Activated B cell treated with CpG ODN at 0.5 μM for 24 hours (primary cell): ENCODE measurements at regions of chr12 and their contacts with region 1.

Region 1: GRCh38 chr12:120725659-120726509 is at the start of gene ACADS:
- DNase-seq: peak; percentile 92
- ATAC-seq: peak; percentile 99
- H3K4me3 Mint-ChIP-seq: peak within 1 kb of the TSS; percentile 86
- H3K27ac Mint-ChIP-seq: peak within 1 kb of the TSS; percentile 70
- H3K4me1 Mint-ChIP-seq: peaks cover 28% of the 10 kb centered on the region
- H3K27me3 Mint-ChIP-seq: no peaks in the 10 kb centered on the region
- CTCF ChIP-seq: no peak
- total RNA-seq, gene ACADS: 9.4 and 11.1 TPM in 2 replicates

Region 2: DNA sequence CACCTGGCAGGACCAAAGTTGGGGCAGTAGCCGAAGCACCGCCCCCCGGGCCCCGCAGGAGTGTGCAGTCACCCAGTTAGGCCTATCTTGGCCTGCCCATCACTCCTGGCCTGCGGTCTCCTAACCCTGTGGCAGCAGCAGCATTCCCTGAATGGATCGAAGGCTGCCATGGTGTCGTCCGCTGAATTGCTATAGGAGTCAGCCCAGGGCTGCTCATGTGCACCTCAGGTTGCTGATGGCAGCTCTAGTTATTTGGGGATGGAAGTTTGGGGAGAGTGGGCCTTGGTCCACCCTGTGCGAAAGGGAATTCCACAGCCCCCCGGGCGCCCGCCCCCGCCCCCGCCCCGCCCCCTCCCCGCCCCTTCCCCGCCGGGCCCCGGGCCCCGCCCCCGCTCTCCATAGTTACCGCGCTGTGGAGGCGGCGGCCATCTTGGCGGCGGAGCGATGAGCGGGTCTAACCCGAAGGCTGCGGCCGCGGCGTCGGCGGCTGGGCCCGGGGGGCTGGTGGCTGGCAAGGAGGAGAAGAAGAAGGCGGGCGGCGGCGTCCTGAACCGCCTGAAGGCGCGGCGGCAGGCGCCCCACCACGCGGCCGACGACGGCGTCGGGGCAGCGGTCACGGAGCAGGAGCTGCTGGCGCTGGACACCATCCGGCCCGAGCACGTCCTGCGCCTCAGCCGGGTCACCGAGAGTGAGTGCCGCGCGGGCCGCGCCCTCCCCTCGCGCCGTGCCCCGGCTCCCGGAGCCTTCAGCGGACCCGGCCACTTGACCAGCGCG is 15.7 kb before region 1 on chr12 and contains the start of gene UNC119B:
- CTCF ChIA-PET with region 1: interaction called, 3 read pairs
- POLR2A ChIA-PET with region 1: no interaction called
- intact Hi-C with region 1: loop called (anchors 1 kb)
- DNase-seq: peak; percentile 71
- ATAC-seq: peak; percentile 92
- H3K4me3 Mint-ChIP-seq: peak within 1 kb of the TSS; percentile 89
- H3K27ac Mint-ChIP-seq: peak within 1 kb of the TSS; percentile 82
- H3K4me1 Mint-ChIP-seq: peaks cover 29% of the 10 kb centered on the region
- H3K27me3 Mint-ChIP-seq: no peaks in the 10 kb centered on the region
- CTCF ChIP-seq: no peak
- total RNA-seq, gene UNC119B: 17.3 and 18.5 TPM in 2 replicates